GM12878 (cell line): ENCODE measurements at regions of chr7 and their contacts with region 1.

Region 1: GRCh38 chr7:2709553-2710285 is 21.7 kb downstream of the AMZ1 start:
- DNase-seq: peak; percentile 61
- ATAC-seq: peak; percentile 86
- H3K4me3 ChIP-seq: peak overlapping the region; percentile 56
- H3K27ac ChIP-seq: peak overlapping the region; percentile 89
- H3K4me1 ChIP-seq: peaks cover 28% of the 10 kb centered on the region
- H3K27me3 ChIP-seq: no peaks in the 10 kb centered on the region
- CTCF ChIP-seq: peak; percentile 95 to 100 (median 100); a peak in 5 of 6 replicates
- EP300 ChIP-seq: no peak
- POLR2A ChIP-seq: peak; percentile 68
- RAD21 ChIP-seq: peak; percentile 93

Region 2: DNA sequence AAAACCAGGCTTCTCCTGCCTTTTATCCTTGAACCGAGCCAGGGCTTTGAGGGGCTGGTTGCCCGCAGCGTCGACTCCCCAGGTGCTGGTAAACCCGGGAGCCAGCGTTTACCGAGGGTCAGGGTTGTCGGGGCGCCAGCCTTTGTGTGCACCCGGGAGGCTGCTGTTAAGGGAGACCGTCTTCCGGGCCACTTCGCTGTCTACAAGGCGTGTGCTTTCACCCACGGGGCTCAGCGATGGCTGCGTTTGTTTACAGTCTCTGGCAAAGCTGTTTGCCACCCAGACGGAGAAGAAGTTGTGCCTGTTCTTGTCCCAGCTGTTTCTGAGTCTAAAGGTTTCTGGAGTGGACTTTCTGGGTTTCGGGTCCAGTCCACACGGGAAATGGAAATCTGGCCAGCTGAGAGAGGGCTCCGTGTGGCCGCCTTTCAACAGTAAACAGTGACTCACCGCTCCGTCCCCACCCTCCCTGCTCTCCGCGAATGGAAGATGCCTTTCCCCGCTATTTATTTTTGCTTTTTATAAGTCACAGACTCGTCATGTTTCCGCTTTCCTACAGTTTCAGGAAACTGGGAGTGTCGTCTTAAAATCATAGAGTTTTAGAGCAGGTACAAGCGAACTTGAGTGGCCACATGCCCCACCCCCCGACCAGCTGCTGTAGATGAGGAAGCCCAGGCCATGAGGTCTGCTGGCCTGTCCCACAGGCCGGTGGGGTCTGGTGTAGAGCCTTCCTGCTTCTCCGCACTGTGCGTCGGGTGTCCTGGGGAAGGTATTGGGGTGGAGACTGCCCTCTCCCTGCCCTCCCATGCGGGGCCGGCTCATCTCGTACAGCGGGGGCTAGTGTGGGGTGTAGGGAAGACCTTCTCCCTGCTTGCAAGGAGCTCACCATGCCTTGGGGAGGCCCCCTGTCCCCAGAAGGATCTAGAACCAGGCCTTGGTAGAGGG is 1177.0 kb before region 1 on chr7:
- CTCF ChIA-PET with region 1: no interaction called
- POLR2A ChIA-PET with region 1: no interaction called
- RAD21 ChIA-PET with region 1: no interaction called
- SMC1A ChIA-PET with region 1: no interaction called
- in situ Hi-C with region 1: no loop called
- intact Hi-C with region 1: no loop called
- DNase-seq: no peak
- ATAC-seq: peak; percentile 62
- H3K4me3 ChIP-seq: peak overlapping the region; percentile 63
- H3K27ac ChIP-seq: peak overlapping the region; percentile 33
- H3K4me1 ChIP-seq: peaks cover 13% of the 10 kb centered on the region
- H3K27me3 ChIP-seq: no peaks in the 10 kb centered on the region
- CTCF ChIP-seq: no peak
- EP300 ChIP-seq: no peak
- POLR2A ChIP-seq: peak; percentile 47
- RAD21 ChIP-seq: no peak

Region 3: GRCh38 chr7:2451171-2452073 is 258.3 kb before region 1 on chr7:
- CTCF ChIA-PET with region 1: interaction called, 29 read pairs
- POLR2A ChIA-PET with region 1: no interaction called
- RAD21 ChIA-PET with region 1: interaction called, 9 read pairs
- SMC1A ChIA-PET with region 1: interaction called, 4 read pairs
- in situ Hi-C with region 1: no loop called
- intact Hi-C with region 1: no loop called
- DNase-seq: no peak
- ATAC-seq: peak; percentile 99
- H3K4me3 ChIP-seq: no peak overlapping the region; the same call in 1 of the 2 replicates
- H3K27ac ChIP-seq: no peak overlapping the region
- H3K4me1 ChIP-seq: peaks cover 7% of the 10 kb centered on the region
- H3K27me3 ChIP-seq: no peaks in the 10 kb centered on the region
- CTCF ChIP-seq: peak; percentile 85 to 97 (median 95)
- EP300 ChIP-seq: no peak
- POLR2A ChIP-seq: no peak
- RAD21 ChIP-seq: peak; percentile 86

Region 4: DNA sequence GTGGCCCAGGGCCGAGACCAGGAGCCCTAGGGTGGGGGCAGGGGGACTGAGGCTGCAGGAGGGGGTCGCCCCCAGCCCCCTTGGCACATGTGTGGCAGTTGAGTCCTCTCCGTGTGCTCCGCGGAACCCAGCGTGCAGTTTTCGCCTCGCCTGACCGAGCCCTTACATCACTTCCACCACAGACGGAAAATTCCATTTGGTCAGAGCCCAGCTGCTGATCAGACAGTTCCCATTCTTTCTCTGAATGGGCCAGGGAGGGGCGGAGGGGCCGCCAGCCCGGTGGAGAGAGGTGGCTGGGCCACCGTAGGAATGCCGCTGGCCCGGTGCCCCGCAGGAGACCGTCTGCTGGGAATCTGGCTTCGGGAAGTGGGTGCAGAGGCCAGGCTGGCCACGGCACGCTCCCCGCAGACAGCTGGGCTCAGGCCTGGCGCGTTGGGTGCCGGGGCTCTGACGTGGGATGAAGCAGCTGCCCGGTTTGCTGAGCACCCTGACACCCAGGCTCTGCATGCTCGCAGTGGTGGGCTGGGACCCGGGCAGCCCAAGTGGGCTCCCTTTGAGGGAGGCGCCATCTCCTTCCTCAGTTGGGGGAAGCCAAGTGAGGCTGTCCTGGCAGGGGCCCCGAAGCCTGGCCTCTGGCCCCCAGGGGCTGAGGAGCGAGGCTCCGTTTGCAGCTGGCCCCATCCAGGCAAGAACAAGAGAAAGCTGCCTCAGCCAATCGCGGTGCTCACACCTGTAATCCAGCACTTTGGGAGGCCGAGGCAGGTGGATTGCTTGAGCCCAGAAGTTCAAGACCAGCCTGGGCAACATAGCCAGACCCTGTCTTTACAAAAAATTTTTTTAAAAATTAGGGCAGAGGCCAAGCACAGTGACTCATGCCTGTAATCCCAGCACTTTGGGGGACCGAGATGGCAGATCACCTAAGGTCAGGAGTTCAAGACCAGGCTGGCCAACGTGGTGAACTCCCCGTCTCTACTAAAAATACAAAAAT is 68.0 kb before region 1 on chr7:
- CTCF ChIA-PET with region 1: interaction called, 26 read pairs
- POLR2A ChIA-PET with region 1: interaction called, 5 read pairs
- RAD21 ChIA-PET with region 1: interaction called, 5 read pairs
- SMC1A ChIA-PET with region 1: interaction called, 17 read pairs
- in situ Hi-C with region 1: no loop called
- intact Hi-C with region 1: no loop called
- DNase-seq: peak; percentile 47
- ATAC-seq: peak; percentile 64
- H3K4me3 ChIP-seq: peak overlapping the region; percentile 12; the same call in 1 of the 2 replicates
- H3K27ac ChIP-seq: peak overlapping the region; percentile 57
- H3K4me1 ChIP-seq: peaks cover 40% of the 10 kb centered on the region
- H3K27me3 ChIP-seq: no peaks in the 10 kb centered on the region
- CTCF ChIP-seq: no peak
- EP300 ChIP-seq: peak; percentile 77 to 91
- POLR2A ChIP-seq: no peak
- RAD21 ChIP-seq: no peak

Region 5: GRCh38 chr7:2698581-2699288 is 11.0 kb before region 1 on chr7:
- CTCF ChIA-PET with region 1: interaction called, 83 read pairs
- POLR2A ChIA-PET with region 1: interaction called, 36 read pairs
- RAD21 ChIA-PET with region 1: interaction called, 70 read pairs
- SMC1A ChIA-PET with region 1: interaction called, 69 read pairs
- in situ Hi-C with region 1: no loop called
- intact Hi-C with region 1: no loop called
- DNase-seq: peak; percentile 93
- ATAC-seq: peak; percentile 96
- H3K4me3 ChIP-seq: 0 out of 2 replicates have a peak overlapping the region, but pooled peaks have one; percentile 32
- H3K27ac ChIP-seq: peak overlapping the region; percentile 38; the same call in 1 of the 2 replicates
- H3K4me1 ChIP-seq: peaks cover 21% of the 10 kb centered on the region
- H3K27me3 ChIP-seq: no peaks in the 10 kb centered on the region
- CTCF ChIP-seq: no peak
- EP300 ChIP-seq: peak; percentile 88 to 98
- POLR2A ChIP-seq: no peak
- RAD21 ChIP-seq: 0 out of 2 replicates have a peak, but pooled peaks have one; percentile 5

Region 6: DNA sequence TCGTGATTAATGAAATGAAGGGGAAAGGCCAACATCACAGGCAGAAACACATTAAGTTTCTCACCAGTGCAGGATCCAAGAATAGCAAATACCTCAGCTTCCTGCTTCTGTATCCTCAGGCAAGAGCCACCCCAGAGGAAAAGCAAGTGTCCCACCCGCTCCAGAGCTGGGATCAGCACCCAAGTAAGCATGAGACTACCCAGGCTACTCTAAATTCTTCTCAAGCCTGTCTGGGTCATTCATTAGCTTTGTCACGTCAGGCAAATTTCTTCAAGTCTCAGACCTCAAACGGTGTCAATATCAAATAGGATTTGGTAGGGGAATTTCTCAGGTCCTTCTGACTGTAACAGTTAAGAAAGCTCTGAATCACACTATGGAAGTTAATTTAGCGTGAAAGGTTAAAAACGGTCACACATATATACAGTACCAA is 75.4 kb after region 1 on chr7:
- CTCF ChIA-PET with region 1: interaction called, 18 read pairs
- POLR2A ChIA-PET with region 1: interaction called, 11 read pairs
- RAD21 ChIA-PET with region 1: interaction called, 18 read pairs
- SMC1A ChIA-PET with region 1: interaction called, 14 read pairs
- in situ Hi-C with region 1: no loop called
- intact Hi-C with region 1: no loop called
- DNase-seq: peak; percentile 40
- ATAC-seq: peak; percentile 94
- H3K4me3 ChIP-seq: no peak overlapping the region
- H3K27ac ChIP-seq: no peak overlapping the region
- H3K4me1 ChIP-seq: no peaks in the 10 kb centered on the region
- H3K27me3 ChIP-seq: no peaks in the 10 kb centered on the region
- CTCF ChIP-seq: no peak
- EP300 ChIP-seq: peak; percentile 49 to 74; a peak in 3 of 4 replicates
- POLR2A ChIP-seq: no peak
- RAD21 ChIP-seq: no peak

Region 7: GRCh38 chr7:2844165-2844898 is 134.6 kb after region 1 on chr7 and contains the start of gene GNA12:
- CTCF ChIA-PET with region 1: interaction called, 16 read pairs
- POLR2A ChIA-PET with region 1: interaction called, 5 read pairs
- RAD21 ChIA-PET with region 1: interaction called, 8 read pairs
- SMC1A ChIA-PET with region 1: interaction called, 11 read pairs
- in situ Hi-C with region 1: no loop called
- intact Hi-C with region 1: loop called (anchors 5 kb)
- DNase-seq: peak; percentile 94
- ATAC-seq: peak; percentile 97
- H3K4me3 ChIP-seq: peak within 1 kb of the TSS; percentile 80
- H3K27ac ChIP-seq: peak within 1 kb of the TSS; percentile 33; the same call in 1 of the 2 replicates
- H3K4me1 ChIP-seq: peaks cover 8% of the 10 kb centered on the region
- H3K27me3 ChIP-seq: no peaks in the 10 kb centered on the region
- CTCF ChIP-seq: no peak
- EP300 ChIP-seq: no peak
- POLR2A ChIP-seq: peak; percentile 69
- RAD21 ChIP-seq: no peak
- polyA plus RNA-seq, gene GNA12: 1.9 to 3.0 TPM